GM12878 (cell line): ENCODE measurements at regions of chr2 and their contacts with region 1.

Region 1: GRCh38 chr2:218979846-218980734 is 4.9 kb downstream of the FEV start:
- DNase-seq: peak; percentile 24
- ATAC-seq: peak; percentile 99
- H3K4me3 ChIP-seq: 0 out of 2 replicates have a peak overlapping the region, but pooled peaks have one; percentile 44
- H3K27ac ChIP-seq: no peak overlapping the region
- H3K4me1 ChIP-seq: no peaks in the 10 kb centered on the region; the same call in 1 of the 2 replicates
- H3K27me3 ChIP-seq: peaks cover 24 to 30% of the 10 kb centered on the region in 2 experiments
- CTCF ChIP-seq: peak; percentile 87 to 93 (median 88)
- EP300 ChIP-seq: no peak
- POLR2A ChIP-seq: no peak
- RAD21 ChIP-seq: peak; percentile 69

Region 2: GRCh38 chr2:218788529-218789255 is 191.4 kb before region 1 on chr2:
- CTCF ChIA-PET with region 1: no interaction called
- POLR2A ChIA-PET with region 1: no interaction called
- RAD21 ChIA-PET with region 1: no interaction called
- SMC1A ChIA-PET with region 1: no interaction called
- in situ Hi-C with region 1: no loop called
- intact Hi-C with region 1: no loop called
- DNase-seq: no peak
- ATAC-seq: no peak
- H3K4me3 ChIP-seq: no peak overlapping the region
- H3K27ac ChIP-seq: no peak overlapping the region
- H3K4me1 ChIP-seq: no peaks in the 10 kb centered on the region
- H3K27me3 ChIP-seq: peaks cover 0 to 3% of the 10 kb centered on the region in 2 experiments; a peak in 2 of 4 replicates
- CTCF ChIP-seq: no peak
- EP300 ChIP-seq: no peak
- POLR2A ChIP-seq: no peak
- RAD21 ChIP-seq: no peak

Region 3: DNA sequence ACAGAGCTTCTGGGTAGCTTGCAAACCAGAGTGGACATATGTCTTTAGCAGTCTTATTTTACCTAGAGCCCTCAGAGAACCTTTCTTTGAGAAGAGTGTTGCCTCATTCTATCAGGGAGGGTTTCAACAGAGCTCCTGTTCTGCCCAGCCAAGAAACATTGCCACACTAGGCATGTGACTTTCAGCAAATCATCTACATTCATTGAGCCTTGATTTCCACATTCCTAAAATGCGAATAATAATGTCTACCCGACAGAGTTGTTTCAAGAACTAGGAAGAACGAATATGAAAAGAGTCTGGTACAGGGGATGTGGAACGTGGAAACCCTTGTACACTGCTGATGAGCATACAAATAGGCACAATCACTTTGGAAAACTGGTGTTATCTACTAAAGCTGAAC is 140.7 kb before region 1 on chr2:
- CTCF ChIA-PET with region 1: no interaction called
- POLR2A ChIA-PET with region 1: no interaction called
- RAD21 ChIA-PET with region 1: no interaction called
- SMC1A ChIA-PET with region 1: no interaction called
- in situ Hi-C with region 1: no loop called
- intact Hi-C with region 1: no loop called
- DNase-seq: no peak
- ATAC-seq: no peak
- H3K4me3 ChIP-seq: no peak overlapping the region
- H3K27ac ChIP-seq: no peak overlapping the region
- H3K4me1 ChIP-seq: no peaks in the 10 kb centered on the region
- H3K27me3 ChIP-seq: peaks cover 0 to 9% of the 10 kb centered on the region in 2 experiments; a peak in 3 of 4 replicates
- CTCF ChIP-seq: no peak
- EP300 ChIP-seq: no peak
- POLR2A ChIP-seq: no peak
- RAD21 ChIP-seq: no peak

Region 4: GRCh38 chr2:218885981-218886947 is 93.8 kb before region 1 on chr2:
- CTCF ChIA-PET with region 1: no interaction called
- POLR2A ChIA-PET with region 1: no interaction called
- RAD21 ChIA-PET with region 1: no interaction called
- SMC1A ChIA-PET with region 1: no interaction called
- in situ Hi-C with region 1: no loop called
- intact Hi-C with region 1: no loop called
- DNase-seq: peak; percentile 98
- ATAC-seq: peak; percentile 69
- H3K4me3 ChIP-seq: peak overlapping the region; percentile 55; the same call in 1 of the 2 replicates
- H3K27ac ChIP-seq: peak overlapping the region; percentile 86
- H3K4me1 ChIP-seq: peaks cover 50% of the 10 kb centered on the region
- H3K27me3 ChIP-seq: no peaks in the 10 kb centered on the region
- CTCF ChIP-seq: no peak
- EP300 ChIP-seq: peak; percentile 84 to 90; a peak in 3 of 4 replicates
- POLR2A ChIP-seq: peak; percentile 55
- RAD21 ChIP-seq: no peak

Region 5: DNA sequence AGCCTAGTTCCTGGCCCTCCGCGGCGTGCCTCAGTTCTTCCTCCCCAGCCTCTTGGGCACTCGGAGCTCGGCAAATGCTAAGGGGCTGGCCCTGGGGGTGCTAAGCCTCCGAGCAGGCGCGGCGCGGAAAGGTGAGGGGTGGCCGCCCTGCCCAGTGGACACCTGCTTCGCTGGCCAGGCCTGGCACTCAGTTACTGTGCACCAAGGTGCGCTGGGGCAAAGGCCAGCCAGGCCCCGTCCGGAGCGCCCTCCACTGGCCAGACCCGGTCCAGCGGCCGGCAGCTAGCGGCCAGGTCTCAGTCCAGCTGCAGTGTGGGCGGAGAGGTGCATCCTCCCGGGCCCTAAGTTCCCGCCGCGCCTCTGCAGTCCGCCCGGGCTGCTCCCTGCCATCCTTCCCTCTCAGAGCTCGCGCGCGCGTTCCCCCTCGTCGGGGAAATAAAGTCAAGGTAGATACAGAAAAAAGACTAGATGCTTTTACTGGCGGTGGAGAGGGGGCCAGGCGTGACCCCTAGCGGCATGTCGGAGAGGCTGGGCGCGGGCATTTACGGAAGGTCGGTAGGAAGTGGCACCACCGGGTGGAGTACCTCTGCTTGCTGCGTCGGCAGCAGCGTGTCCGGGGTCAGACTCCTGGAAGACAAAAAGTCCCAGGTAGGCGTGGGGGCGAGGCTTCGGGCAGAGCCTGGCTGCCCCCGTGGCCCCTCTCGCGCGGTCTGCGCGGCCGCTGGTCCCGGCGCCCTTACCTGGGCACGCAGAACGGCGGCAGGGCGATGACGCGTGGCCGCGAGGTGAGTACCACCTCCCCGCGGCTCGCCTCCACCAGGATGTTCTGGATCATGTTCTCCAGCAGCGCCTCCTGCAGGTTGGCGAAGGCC is 22.5 kb after region 1 on chr2:
- CTCF ChIA-PET with region 1: interaction called, 12 read pairs
- POLR2A ChIA-PET with region 1: no interaction called
- RAD21 ChIA-PET with region 1: no interaction called
- SMC1A ChIA-PET with region 1: no interaction called
- in situ Hi-C with region 1: no loop called
- intact Hi-C with region 1: no loop called
- DNase-seq: no peak
- ATAC-seq: peak; percentile 61
- H3K4me3 ChIP-seq: no peak overlapping the region
- H3K27ac ChIP-seq: no peak overlapping the region
- H3K4me1 ChIP-seq: no peaks in the 10 kb centered on the region
- H3K27me3 ChIP-seq: peaks cover 9 to 19% of the 10 kb centered on the region in 2 experiments
- CTCF ChIP-seq: peak in 2 of 3 experiments; percentile 15 to 23; a peak in 2 of 6 replicates
- EP300 ChIP-seq: no peak
- POLR2A ChIP-seq: no peak
- RAD21 ChIP-seq: no peak